ENCODE measurements at regions of chr2 and their contacts with region 1.

Region 1: DNA sequence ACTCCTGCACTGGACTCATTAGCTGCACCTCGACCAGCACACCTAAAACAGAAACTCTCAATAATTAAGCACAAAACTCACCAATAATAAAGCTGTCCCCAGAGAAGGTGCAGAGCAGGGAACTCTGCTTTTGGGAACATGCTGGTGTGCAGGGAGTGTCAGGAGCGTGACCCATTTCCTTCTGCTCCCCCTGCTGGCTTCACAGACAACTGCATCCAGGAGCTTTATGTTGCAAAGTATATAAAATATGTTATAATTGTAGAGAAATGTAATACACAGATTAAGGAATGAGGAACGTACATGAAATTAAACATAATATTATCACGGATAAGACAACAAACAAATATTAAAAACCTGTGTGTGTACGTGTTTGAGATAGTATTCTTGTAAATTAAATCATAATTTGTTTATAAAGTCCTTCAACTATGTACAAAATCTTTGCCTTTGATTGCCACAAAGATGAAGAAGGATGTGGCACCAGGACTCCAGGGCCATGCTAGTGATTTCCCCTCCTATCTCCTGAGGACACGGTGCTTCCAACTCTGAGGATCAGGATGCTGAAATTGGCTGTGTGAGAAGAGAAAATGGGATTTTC is 68.6 kb upstream of the MAL start:
- DNase-seq: peak; percentile 57
- H3K4me3 Mint-ChIP-seq: no peak overlapping the region
- H3K27ac Mint-ChIP-seq: no peak overlapping the region
- H3K4me1 Mint-ChIP-seq: no peaks in the 10 kb centered on the region
- H3K27me3 Mint-ChIP-seq: peaks cover 32% of the 10 kb centered on the region

Region 2: DNA sequence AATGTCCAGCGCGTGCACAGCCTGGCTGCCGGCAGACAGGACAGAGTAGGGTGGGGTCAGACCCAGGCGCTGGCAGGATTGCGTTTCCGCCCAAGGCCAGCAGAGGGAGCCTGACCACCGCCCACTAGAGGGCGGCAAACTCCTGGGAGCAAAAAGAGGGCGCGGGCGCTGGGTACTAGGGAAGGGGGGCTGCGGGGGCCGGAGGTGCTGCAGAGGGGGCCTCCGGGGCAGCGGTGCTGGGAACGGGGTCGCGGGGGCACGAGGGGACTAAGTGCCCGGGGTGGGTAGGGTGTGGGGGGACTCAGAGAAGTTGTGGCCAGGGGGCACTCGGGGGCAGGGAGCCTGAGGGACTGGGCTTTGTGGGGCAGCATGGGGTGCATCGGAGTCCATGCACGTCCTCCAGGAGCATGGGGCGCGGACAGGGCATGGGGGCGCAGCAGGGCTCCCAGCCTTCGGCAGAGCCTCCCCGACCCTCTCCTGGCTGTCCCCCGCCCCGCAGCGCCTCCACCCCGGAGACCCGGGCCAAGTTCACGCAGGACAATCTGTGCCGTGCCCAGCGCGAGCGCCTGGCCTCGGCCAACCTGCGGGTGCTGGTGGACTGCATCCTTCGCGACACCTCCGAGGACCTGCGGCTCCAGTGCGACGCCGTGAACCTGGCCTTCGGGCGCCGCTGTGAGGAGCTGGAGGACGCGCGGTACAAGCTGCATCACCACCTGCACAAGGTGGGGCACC is 82.5 kb before region 1 on chr2:
- CTCF ChIA-PET with region 1: interaction called, 10 read pairs
- DNase-seq: peak; percentile 78
- H3K4me3 Mint-ChIP-seq: no peak overlapping the region
- H3K27ac Mint-ChIP-seq: no peak overlapping the region
- H3K4me1 Mint-ChIP-seq: no peaks in the 10 kb centered on the region
- H3K27me3 Mint-ChIP-seq: peaks cover 55% of the 10 kb centered on the region

Region 3: DNA sequence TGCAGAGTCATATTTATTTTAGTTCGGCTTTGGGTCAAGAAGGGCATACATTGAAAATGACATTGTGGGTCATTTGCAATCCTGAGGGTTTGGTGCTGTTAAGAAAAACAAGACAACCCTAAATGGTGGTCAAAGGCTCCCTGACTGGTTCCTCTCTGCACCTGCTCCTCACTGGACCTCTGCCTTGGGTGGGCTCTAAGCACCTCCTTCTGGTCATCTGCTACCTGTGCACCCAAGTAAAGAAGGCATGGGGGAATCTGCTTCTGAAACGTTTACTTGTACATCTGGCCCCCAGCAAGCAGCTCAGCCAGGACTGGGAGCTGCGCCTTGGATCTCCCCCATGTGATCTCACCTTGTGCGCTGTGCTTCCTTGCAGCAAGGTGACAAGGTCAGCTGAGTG is 13.5 kb after region 1 on chr2:
- CTCF ChIA-PET with region 1: interaction called, 10 read pairs
- DNase-seq: no peak
- H3K4me3 Mint-ChIP-seq: no peak overlapping the region
- H3K27ac Mint-ChIP-seq: no peak overlapping the region
- H3K4me1 Mint-ChIP-seq: no peaks in the 10 kb centered on the region
- H3K27me3 Mint-ChIP-seq: peaks cover 44% of the 10 kb centered on the region

Region 4: DNA sequence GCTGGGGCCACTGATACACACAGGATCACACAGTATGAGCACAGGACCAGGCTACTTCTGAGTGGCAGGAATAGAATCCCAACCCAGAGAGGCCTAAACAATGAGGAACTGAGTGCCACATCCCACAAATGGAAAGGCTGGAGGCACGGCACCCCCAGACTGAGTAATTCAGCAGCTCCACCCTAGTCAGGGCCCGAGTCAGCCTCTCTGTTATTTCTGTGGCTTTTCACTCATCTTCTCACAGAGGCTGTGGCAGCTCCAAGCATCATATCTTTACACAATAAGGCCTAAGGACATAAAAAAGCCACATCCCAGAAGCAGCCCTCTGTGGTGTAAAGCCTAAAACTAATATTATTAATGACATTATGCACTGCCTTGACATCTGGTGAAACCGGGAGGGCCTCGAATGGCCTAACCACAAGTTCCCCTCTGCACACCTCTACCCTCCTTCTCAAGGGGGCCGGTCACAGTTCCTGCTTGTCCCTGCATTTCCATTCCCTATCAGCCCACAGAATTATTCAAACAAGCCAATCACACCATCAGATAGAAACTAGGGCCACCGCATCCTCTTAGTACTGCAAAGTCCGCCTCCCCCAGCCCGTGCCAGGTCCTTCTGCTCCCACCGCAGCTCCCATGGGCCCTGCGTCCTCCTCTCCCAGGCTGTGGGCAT is 56.1 kb after region 1 on chr2:
- CTCF ChIA-PET with region 1: no interaction called
- DNase-seq: no peak
- H3K4me3 Mint-ChIP-seq: no peak overlapping the region
- H3K27ac Mint-ChIP-seq: no peak overlapping the region
- H3K4me1 Mint-ChIP-seq: peaks cover 7% of the 10 kb centered on the region
- H3K27me3 Mint-ChIP-seq: peaks cover 7% of the 10 kb centered on the region

Region 5: DNA sequence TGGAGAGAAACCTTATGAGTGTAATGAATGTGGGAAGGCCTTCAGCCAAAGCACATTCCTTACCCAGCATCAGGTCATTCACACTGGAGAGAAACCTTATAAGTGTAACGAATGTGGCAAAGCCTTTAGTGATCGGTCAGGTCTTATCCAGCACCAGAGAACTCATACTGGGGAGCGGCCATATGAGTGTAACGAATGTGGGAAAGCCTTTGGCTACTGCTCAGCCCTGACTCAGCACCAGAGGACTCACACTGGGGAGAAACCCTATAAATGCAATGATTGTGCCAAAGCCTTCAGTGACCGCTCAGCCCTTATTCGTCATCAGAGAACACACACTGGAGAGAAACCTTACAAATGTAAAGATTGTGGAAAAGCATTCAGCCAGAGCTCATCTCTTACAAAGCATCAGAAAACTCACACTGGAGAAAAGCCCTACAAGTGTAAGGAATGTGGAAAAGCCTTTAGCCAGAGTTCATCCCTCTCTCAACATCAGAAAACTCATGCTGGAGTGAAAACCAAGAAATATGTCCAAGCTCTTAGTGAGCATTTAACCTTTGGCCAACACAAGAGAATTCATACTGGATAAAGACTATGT is 258.2 kb after region 1 on chr2:
- CTCF ChIA-PET with region 1: no interaction called
- DNase-seq: no peak
- H3K4me3 Mint-ChIP-seq: no peak overlapping the region
- H3K27ac Mint-ChIP-seq: no peak overlapping the region
- H3K4me1 Mint-ChIP-seq: no peaks in the 10 kb centered on the region
- H3K27me3 Mint-ChIP-seq: no peaks in the 10 kb centered on the region

Region 6: GRCh38 chr2:95552911-95553310 is 596.0 kb after region 1 on chr2:
- CTCF ChIA-PET with region 1: no interaction called
- DNase-seq: no peak
- H3K4me3 Mint-ChIP-seq: no peak overlapping the region
- H3K27ac Mint-ChIP-seq: no peak overlapping the region
- H3K4me1 Mint-ChIP-seq: no peaks in the 10 kb centered on the region
- H3K27me3 Mint-ChIP-seq: peaks cover 22% of the 10 kb centered on the region